ENCODE measurements at regions of chr1 and their contacts with region 1.

Region 1: DNA sequence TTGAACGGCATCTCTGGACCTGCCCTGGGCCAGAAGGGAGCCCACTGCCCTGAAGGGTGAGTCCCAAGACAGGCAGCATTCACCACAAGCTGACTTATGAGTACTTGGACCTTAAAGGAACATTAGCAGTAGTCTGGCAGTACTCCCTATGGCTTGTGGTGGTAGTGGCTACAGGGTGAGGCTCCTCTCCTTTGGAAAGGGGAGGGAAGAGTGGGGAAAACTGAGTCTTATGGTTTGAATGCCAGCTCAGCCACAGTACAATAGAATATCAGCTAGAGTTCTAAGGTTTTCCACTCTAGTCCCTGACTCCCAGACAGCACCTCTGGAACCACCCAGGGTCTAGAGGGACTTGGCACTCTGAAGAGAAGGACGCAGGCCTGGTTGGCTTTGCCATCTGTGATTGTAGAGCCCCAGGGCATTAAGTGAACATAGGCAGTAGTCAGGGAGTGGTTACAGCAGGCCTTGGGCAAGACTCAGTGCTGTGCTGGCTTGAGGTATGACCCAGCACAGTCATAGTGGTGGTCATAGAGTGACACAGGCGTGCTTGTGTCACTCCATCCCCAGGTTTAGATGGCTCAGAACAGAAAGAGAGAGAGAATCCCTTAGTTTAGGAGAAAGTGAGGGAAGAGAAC is 31.0 kb downstream of the CD53 start:
- DNase-seq: no peak
- ATAC-seq: no peak
- H3K4me3 ChIP-seq: no peak overlapping the region
- H3K4me3 Mint-ChIP-seq: no peak overlapping the region
- H3K27ac ChIP-seq: peak overlapping the region in 1 of 2 donors; percentile 76
- H3K27ac Mint-ChIP-seq: peak overlapping the region; percentile 54
- H3K4me1 ChIP-seq: peaks cover 0 to 4% of the 10 kb centered on the region in 2 donors
- H3K4me1 Mint-ChIP-seq: peaks cover 44% of the 10 kb centered on the region
- H3K27me3 ChIP-seq: no peaks in the 10 kb centered on the region
- H3K27me3 Mint-ChIP-seq: no peaks in the 10 kb centered on the region
- CTCF ChIP-seq: no peak

Region 2: DNA sequence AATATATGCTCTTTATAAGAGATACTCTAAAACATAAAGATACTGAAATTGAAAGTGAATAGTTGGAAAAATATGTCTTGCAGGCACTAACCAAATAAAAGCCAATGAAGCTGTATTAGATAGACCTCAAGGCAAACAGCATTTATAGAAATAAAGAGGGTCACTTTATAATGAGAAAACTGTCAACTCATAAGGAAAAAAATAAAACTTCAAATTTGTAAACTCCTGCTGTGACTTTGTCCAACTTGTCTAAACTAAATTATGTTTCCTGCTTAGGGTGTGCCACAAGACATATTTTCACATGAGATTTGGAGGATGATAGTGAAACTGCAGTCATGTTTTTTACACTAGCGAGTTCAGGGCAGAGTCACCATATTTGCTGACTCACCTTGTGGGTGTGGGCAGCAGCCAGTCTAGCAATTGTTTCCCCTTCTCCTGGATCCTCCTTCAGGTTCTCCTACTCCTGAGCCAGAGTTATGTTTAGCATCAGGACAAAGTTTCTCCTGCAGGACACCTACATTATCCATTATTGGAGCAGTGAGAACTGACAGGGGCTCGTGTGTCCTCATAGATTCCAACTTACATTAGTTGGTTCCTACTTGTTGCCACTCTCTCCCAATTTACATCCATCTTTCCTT is 12.8 kb after region 1 on chr1:
- CTCF ChIA-PET with region 1: no interaction called
- POLR2A ChIA-PET with region 1: no interaction called
- intact Hi-C with region 1: loop called (anchors 1 kb)
- DNase-seq: no peak
- ATAC-seq: no peak
- H3K4me3 ChIP-seq: no peak overlapping the region
- H3K4me3 Mint-ChIP-seq: no peak overlapping the region
- H3K27ac ChIP-seq: no peak overlapping the region
- H3K27ac Mint-ChIP-seq: no peak overlapping the region
- H3K4me1 ChIP-seq: no peaks in the 10 kb centered on the region
- H3K4me1 Mint-ChIP-seq: peaks cover 5% of the 10 kb centered on the region
- H3K27me3 ChIP-seq: peaks cover 0 to 6% (median 0%) of the 10 kb centered on the region in 4 experiments
- H3K27me3 Mint-ChIP-seq: no peaks in the 10 kb centered on the region
- CTCF ChIP-seq: no peak